ENCODE measurements at regions of chr18 and their contacts with region 1.

Region 1: GRCh38 chr18:63963615-63964256 is 6.1 kb upstream of the SERPINB8 start:
- DNase-seq: peak; percentile 57 to 71 (median 61)
- H3K4me3 ChIP-seq: no peak overlapping the region
- H3K4me3 Mint-ChIP-seq: no peak overlapping the region
- H3K27ac ChIP-seq: no peak overlapping the region
- H3K27ac Mint-ChIP-seq: peak overlapping the region in 2 of 7 donors; percentile 2 to 25
- H3K4me1 ChIP-seq: no peaks in the 10 kb centered on the region
- H3K4me1 Mint-ChIP-seq: peaks cover 0 to 2% (median 0%) of the 10 kb centered on the region in 4 donors
- H3K27me3 ChIP-seq: no peaks in the 10 kb centered on the region
- H3K27me3 Mint-ChIP-seq: peaks cover 0 to 6% of the 10 kb centered on the region in 2 donors

Region 2: DNA sequence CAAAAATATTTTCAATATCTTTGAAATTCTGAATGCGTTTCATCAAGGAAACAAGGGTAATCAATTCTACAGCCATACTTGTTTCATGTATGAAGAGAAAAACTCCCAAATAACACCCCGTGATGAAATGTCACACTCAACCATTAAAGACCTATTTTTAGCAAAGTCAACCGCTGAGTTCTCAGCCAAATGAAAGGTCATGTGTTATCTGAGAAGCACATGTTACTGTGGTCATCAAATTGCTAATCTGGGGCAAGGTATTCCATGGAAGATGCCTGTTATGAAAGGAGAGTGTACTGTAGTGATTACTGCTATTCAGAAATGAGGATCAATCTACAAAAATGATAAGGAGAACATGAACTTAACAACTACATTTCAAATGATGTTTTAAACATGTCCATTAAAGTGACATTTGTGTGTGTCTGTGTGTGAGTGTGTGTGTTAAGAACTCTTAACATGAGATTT is 770.8 kb before region 1 on chr18:
- CTCF ChIA-PET with region 1: no interaction called
- POLR2A ChIA-PET with region 1: no interaction called
- intact Hi-C with region 1: no loop called
- DNase-seq: no peak
- H3K4me3 ChIP-seq: no peak overlapping the region
- H3K4me3 Mint-ChIP-seq: no peak overlapping the region
- H3K27ac ChIP-seq: no peak overlapping the region
- H3K27ac Mint-ChIP-seq: peak overlapping the region in 6 of 7 donors; percentile 17 to 68 (median 53)
- H3K4me1 ChIP-seq: peaks cover 51% of the 10 kb centered on the region
- H3K4me1 Mint-ChIP-seq: peaks cover 38 to 65% (median 42%) of the 10 kb centered on the region in 4 donors
- H3K27me3 ChIP-seq: no peaks in the 10 kb centered on the region
- H3K27me3 Mint-ChIP-seq: no peaks in the 10 kb centered on the region

Region 3: DNA sequence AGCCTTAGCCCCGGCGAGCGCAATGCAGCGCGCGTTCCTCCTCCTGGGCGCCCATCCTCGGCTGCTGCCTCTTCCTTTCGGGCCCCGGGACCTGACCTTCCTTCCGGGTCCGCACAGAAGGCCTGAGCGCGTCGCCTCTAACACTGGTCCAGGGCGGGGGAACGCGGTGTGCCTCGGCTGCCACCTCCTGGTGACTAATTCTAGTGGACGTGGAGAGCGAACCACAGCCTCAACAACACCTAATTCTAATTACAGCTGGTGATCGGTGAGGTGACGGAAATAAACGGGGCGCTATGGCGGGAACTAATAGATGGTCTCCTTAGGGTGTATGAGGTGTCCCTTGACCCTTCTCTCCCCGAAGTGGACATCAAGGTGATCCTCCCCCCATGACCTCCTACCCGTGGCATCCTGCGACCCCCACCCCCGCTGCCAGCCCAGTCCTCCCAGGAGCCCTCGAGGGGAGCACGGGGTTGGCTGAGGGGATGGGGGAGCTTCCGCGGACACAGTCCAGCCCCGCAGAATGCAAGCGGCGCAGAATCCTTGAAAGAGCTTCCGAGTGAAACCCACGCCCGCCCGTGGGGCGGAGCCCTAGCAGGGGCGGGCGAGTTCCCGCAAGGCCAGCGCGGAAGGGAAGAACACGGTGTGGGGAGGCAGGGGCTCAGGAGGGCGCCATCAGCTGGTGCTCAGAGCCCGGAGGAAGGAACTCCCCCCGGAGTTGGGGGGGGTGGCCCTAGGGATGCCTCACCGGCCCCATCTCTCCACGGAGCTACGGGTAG is 27.4 kb before region 1 on chr18:
- CTCF ChIA-PET with region 1: interaction called, 14 read pairs
- POLR2A ChIA-PET with region 1: no interaction called
- intact Hi-C with region 1: no loop called
- DNase-seq: peak; percentile 34 to 61 (median 44)
- H3K4me3 ChIP-seq: peak overlapping the region; percentile 27 to 55
- H3K4me3 Mint-ChIP-seq: peak overlapping the region in 6 of 8 donors; percentile 69 to 83 (median 77)
- H3K27ac ChIP-seq: no peak overlapping the region
- H3K27ac Mint-ChIP-seq: no peak overlapping the region
- H3K4me1 ChIP-seq: peaks cover 14% of the 10 kb centered on the region
- H3K4me1 Mint-ChIP-seq: peaks cover 0 to 5% (median 2%) of the 10 kb centered on the region in 4 donors
- H3K27me3 ChIP-seq: peaks cover 5% of the 10 kb centered on the region
- H3K27me3 Mint-ChIP-seq: peaks cover 3 to 9% of the 10 kb centered on the region in 2 donors

Region 4: GRCh38 chr18:63949068-63949737 is 14.5 kb before region 1 on chr18 and contains the start of gene HMSD:
- CTCF ChIA-PET with region 1: interaction called, 20 read pairs
- POLR2A ChIA-PET with region 1: no interaction called
- intact Hi-C with region 1: no loop called
- DNase-seq: peak; percentile 34 to 61 (median 46)
- H3K4me3 ChIP-seq: peak within 1 kb of the TSS; percentile 29 to 42
- H3K4me3 Mint-ChIP-seq: peak within 1 kb of the TSS; percentile 73 to 89 (median 78)
- H3K27ac ChIP-seq: no peak within 1 kb of the TSS
- H3K27ac Mint-ChIP-seq: peak within 1 kb of the TSS in 2 of 7 donors; percentile 60 to 61
- H3K4me1 ChIP-seq: peaks cover 13% of the 10 kb centered on the region
- H3K4me1 Mint-ChIP-seq: peaks cover 8 to 27% (median 20%) of the 10 kb centered on the region in 4 donors
- H3K27me3 ChIP-seq: no peaks in the 10 kb centered on the region
- H3K27me3 Mint-ChIP-seq: peaks cover 4 to 13% of the 10 kb centered on the region in 2 donors
- total RNA-seq, gene HMSD: 1.8 to 2.2 TPM

Region 5: DNA sequence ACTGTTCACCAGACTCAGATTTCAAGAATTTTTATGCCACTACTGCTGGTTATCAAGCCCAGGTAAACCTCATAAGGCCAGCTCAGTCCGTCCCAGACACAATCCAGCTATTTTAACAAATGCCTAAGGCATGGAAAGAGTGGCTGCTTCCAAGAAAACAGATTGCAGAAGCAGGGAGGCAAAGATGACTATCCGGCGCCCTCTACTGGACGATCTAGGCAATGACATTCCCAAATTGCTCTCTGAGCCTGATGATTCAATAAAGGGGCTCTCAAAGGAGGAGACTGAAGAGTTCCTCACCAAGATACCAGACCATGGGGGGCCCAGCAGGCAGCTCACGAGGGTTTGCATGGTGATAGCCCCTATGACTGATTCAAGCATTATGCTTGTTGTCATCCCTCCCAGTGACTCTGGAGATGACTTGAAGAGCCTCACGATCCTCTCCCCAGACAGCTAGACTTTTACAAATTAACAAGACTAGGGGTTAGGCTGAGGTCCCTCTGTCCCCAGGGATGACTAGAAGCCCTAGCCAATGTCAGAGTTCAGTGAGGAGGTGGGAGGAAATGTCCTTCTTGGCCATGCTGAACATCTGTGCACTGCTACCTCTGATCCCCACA is 31.2 kb after region 1 on chr18:
- CTCF ChIA-PET with region 1: interaction called, 56 read pairs
- POLR2A ChIA-PET with region 1: no interaction called
- intact Hi-C with region 1: loop called (anchors 1 kb)
- DNase-seq: peak in 4 of 5 donors; percentile 20 to 36 (median 28)
- H3K4me3 ChIP-seq: no peak overlapping the region
- H3K4me3 Mint-ChIP-seq: no peak overlapping the region
- H3K27ac ChIP-seq: no peak overlapping the region
- H3K27ac Mint-ChIP-seq: no peak overlapping the region
- H3K4me1 ChIP-seq: no peaks in the 10 kb centered on the region
- H3K4me1 Mint-ChIP-seq: peaks cover 0 to 9% (median 8%) of the 10 kb centered on the region in 4 donors
- H3K27me3 ChIP-seq: no peaks in the 10 kb centered on the region
- H3K27me3 Mint-ChIP-seq: peaks cover 1 to 2% of the 10 kb centered on the region in 2 donors

Measured in CD4-positive, alpha-beta memory T cell (primary cell).